Heart right ventricle (tissue), 16 donors: ENCODE measurements at regions of chr7 and their contacts with region 1.

Region 1: GRCh38 chr7:26151953-26152781 is at the start of gene NFE2L3:
- DNase-seq: peak; percentile 36 to 75
- ATAC-seq: peak; percentile 74 to 93 (median 82)
- H3K4me3 ChIP-seq: peak within 1 kb of the TSS; percentile 19 to 69 (median 56)
- H3K27ac ChIP-seq: peak within 1 kb of the TSS in 1 of 10 donors; percentile 66
- H3K4me1 ChIP-seq: peaks cover 0 to 52% (median 13%) of the 10 kb centered on the region in 9 donors
- H3K27me3 ChIP-seq: peaks cover 7 to 58% (median 37%) of the 10 kb centered on the region in 7 donors
- CTCF ChIP-seq: peak in 6 of 9 donors; percentile 21 to 36 (median 24)
- total RNA-seq, gene NFE2L3: 0.32 to 4.1 (median 1.1) TPM

Region 2: GRCh38 chr7:26245150-26245549 is 93.0 kb after region 1 on chr7:
- intact Hi-C with region 1: loop called in 1 of 10 experiments (anchors 10 kb)
- DNase-seq: no peak
- ATAC-seq: no peak
- H3K4me3 ChIP-seq: no peak overlapping the region
- H3K27ac ChIP-seq: no peak overlapping the region
- H3K4me1 ChIP-seq: no peaks in the 10 kb centered on the region
- H3K27me3 ChIP-seq: peaks cover 0 to 19% (median 4%) of the 10 kb centered on the region in 7 donors
- CTCF ChIP-seq: no peak